ENCODE measurements at regions of chr14 and their contacts with region 1.

Region 1: DNA sequence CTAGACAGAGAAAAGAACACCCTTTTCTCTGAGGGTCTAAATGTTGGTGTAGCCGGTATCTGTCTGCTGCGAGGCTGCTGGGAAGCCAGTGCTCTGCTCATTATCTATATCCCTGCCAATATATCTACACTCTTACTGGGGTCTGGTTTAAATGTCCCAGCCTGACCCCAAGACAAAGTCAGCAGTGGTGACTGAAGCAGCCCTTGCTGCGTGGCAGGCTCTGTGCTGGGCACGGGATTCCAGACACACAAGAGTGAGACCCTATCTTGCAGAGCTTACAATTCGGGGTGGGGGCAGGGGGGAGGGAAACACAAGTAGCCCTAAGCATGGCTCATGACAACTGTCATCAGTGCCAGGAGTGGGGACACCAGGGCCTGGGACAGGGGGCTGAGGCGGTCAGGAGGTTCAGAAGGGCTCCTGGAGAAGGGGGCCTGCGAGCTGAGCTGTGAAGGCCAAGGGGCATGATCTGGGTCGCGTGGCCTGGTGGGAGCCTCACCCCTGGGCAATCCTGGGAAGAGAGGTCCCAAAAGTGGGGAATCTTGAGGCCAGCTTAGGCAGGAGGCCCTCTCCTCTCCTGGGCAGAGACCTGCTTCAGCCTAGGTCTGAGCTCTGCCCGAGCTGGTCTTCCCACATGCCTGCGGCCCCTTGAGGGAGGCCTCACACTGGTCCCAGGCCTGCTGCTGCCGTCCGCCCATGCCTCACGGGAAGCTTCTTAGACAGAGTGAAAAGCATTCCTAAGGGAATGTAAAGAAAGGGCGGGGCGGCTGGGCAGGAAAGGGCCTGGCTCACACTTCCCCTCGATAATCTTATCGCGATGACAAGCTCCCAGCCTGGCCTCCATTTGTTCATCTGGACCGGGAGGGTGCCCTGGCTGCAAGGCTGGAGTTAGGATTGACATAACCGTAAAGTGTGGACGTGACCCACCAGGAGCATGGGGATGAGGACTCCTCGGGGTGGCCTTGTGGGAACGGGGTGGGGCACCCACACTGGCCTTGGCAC is 7.3 kb upstream of the RCOR1 start:
- DNase-seq: no peak
- H3K4me3 ChIP-seq: no peak overlapping the region
- H3K27ac ChIP-seq: no peak overlapping the region
- H3K4me1 ChIP-seq: no peaks in the 10 kb centered on the region
- H3K27me3 ChIP-seq: no peaks in the 10 kb centered on the region
- CTCF ChIP-seq: no peak
- POLR2A ChIP-seq: no peak

Region 2: GRCh38 chr14:102524466-102525218 is 60.5 kb before region 1 on chr14:
- intact Hi-C with region 1: loop called (anchors 5 kb)
- DNase-seq: peak; percentile 100
- H3K4me3 ChIP-seq: peak overlapping the region; percentile 14 to 70 (median 36)
- H3K27ac ChIP-seq: peak overlapping the region; percentile 63 to 83 (median 83)
- H3K4me1 ChIP-seq: peaks cover 5% of the 10 kb centered on the region in 2 donors
- H3K27me3 ChIP-seq: no peaks in the 10 kb centered on the region
- CTCF ChIP-seq: peak; percentile 94 to 100 (median 98)
- POLR2A ChIP-seq: peak in 1 of 2 donors; percentile 75

Region 3: DNA sequence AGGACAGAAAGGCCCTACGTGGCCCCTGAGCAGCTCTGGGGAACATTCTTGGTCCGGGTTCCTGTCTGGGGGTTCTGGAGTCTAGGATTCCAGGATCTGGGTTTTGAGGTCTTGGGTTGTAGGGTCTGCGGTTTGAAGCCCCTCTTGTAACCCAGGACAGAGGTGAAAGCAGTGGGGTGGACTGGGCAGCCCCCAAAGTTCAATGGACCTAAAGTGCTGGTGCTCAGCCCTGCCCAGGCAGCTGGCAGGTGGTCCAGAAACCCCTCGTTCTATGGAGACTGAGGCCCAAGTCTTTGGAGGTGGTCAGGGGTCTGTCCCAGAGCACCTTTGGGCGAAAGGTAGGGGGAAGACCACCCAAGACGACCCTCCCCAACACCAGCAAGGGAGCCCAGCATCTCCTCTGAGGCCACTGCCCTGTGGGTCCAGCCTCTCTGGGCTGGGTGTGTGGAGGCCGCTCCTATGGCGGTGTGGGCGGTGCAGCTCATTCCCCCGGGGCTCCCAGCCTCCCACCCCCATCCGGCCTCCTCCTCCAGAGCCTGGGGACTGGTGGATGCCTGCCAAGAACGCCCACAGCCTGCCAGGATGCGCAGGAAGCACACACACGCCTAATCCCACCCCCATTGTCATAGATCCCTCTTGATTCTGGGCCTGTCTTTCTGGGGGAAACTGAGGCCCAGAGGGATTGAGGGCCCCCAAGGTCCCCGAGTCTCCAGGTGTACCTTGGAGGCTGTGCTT is 45.4 kb before region 1 on chr14:
- intact Hi-C with region 1: no loop called
- DNase-seq: no peak
- H3K4me3 ChIP-seq: no peak overlapping the region
- H3K27ac ChIP-seq: no peak overlapping the region
- H3K4me1 ChIP-seq: peaks cover 0 to 11% of the 10 kb centered on the region in 2 donors
- H3K27me3 ChIP-seq: peaks cover 5% of the 10 kb centered on the region
- CTCF ChIP-seq: no peak
- POLR2A ChIP-seq: no peak